ENCODE measurements at regions of chr7 and their contacts with region 1.

Region 1: DNA sequence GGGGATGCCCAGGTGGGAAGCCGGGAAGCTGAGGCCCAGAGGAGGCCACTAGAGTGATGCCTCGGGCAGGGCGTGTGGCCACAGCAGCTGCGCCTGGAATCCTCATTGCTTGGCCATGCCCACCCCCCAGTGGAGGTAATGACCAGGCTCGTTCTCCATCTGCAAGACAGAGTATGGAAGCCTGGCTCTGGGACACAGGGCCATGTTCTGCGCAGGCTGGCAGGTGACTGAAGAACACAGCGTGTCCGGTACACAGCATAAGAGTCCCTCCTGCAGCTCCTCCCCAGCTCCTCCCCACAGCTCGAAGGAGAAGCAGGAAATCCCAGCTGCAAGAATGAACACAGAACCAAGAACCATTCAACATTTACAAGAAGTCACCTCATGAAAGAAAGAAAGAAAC is 64.8 kb downstream of the SMURF1 start:
- DNase-seq: no peak
- ATAC-seq: peak; percentile 29; the same call in 1 of the 2 replicates
- H3K4me3 ChIP-seq: no peak overlapping the region
- H3K27ac ChIP-seq: no peak overlapping the region
- H3K4me1 ChIP-seq: peaks cover 18% of the 10 kb centered on the region
- H3K27me3 ChIP-seq: no peaks in the 10 kb centered on the region
- CTCF ChIP-seq: no peak

Region 2: DNA sequence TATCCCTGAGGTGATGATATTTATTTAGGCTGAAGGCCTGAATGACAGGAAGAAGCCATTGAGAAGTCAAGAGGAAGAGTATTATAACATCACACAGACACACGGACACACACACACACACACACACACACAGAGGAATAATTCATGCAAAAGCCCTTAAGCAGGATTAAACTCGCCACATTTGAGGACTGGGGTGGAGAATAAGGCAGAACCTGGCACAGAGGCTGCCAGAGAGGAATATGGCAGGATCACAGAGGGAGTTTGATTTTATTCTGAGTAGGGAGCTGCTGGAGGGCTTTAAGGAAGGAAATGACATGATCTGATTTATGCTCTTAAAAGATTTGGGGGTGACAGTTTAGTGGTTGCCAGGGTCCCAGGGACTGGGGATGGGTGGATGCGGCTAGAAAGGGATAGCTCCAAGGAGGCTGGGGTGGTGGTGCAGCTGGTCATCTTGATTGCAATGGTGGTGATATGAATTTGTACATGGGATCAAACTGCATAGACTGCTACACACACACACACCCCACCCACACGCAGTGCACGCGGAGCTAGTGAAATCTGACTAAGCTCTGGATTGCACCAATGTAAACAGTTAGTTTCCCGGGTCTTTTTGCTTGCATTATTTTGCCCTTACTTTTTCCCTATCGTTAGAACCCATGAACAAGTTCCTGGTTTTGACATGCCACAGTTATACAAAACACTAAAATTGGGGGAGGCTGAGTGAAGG is 53.7 kb after region 1 on chr7:
- CTCF ChIA-PET with region 1: no interaction called
- POLR2A ChIA-PET with region 1: interaction called, 23 read pairs
- intact Hi-C with region 1: no loop called
- DNase-seq: peak; percentile 53
- ATAC-seq: peak; percentile 70
- H3K4me3 ChIP-seq: no peak overlapping the region
- H3K27ac ChIP-seq: no peak overlapping the region
- H3K4me1 ChIP-seq: peaks cover 49% of the 10 kb centered on the region
- H3K27me3 ChIP-seq: no peaks in the 10 kb centered on the region
- CTCF ChIP-seq: no peak

Region 3: GRCh38 chr7:99190359-99191032 is 111.4 kb after region 1 on chr7:
- CTCF ChIA-PET with region 1: no interaction called
- POLR2A ChIA-PET with region 1: interaction called, 10 read pairs
- intact Hi-C with region 1: no loop called
- DNase-seq: no peak
- ATAC-seq: no peak
- H3K4me3 ChIP-seq: no peak overlapping the region
- H3K27ac ChIP-seq: no peak overlapping the region
- H3K4me1 ChIP-seq: peaks cover 16% of the 10 kb centered on the region
- H3K27me3 ChIP-seq: no peaks in the 10 kb centered on the region
- CTCF ChIP-seq: no peak